Common myeloid progenitor, CD34-positive (primary cell): ENCODE measurements at regions of chr17 and their contacts with region 1.

Region 1: GRCh38 chr17:2054512-2055291 is at the start of gene HIC1:
- DNase-seq: peak in 2 of 3 donors; percentile 71 to 74
- H3K4me3 ChIP-seq: peak within 1 kb of the TSS; percentile 23 to 66 (median 56)
- H3K27ac ChIP-seq: no peak within 1 kb of the TSS
- H3K4me1 ChIP-seq: peaks cover 0 to 77% (median 71%) of the 10 kb centered on the region in 4 experiments
- H3K27me3 ChIP-seq: peaks cover 0 to 76% (median 21%) of the 10 kb centered on the region in 5 experiments

Region 2: GRCh38 chr17:2064980-2065785 is 10.5 kb after region 1 on chr17:
- CTCF ChIA-PET with region 1: interaction called, 21 read pairs
- POLR2A ChIA-PET with region 1: no interaction called
- DNase-seq: peak in 2 of 3 donors; percentile 64 to 69
- H3K4me3 ChIP-seq: no peak overlapping the region
- H3K27ac ChIP-seq: no peak overlapping the region
- H3K4me1 ChIP-seq: peaks cover 0 to 41% (median 27%) of the 10 kb centered on the region in 4 experiments
- H3K27me3 ChIP-seq: no peaks in the 10 kb centered on the region

Region 3: GRCh38 chr17:2087597-2088211 is 33.0 kb after region 1 on chr17:
- CTCF ChIA-PET with region 1: interaction called, 42 read pairs
- POLR2A ChIA-PET with region 1: no interaction called
- DNase-seq: peak; percentile 90 to 98 (median 97)
- H3K4me3 ChIP-seq: peak overlapping the region in 4 of 7 experiments; percentile 3 to 74 (median 20)
- H3K27ac ChIP-seq: no peak overlapping the region
- H3K4me1 ChIP-seq: peaks cover 35 to 86% (median 69%) of the 10 kb centered on the region in 4 experiments
- H3K27me3 ChIP-seq: peaks cover 0 to 1% (median 0%) of the 10 kb centered on the region in 5 experiments

Region 4: GRCh38 chr17:2122641-2123302 is 68.1 kb after region 1 on chr17:
- CTCF ChIA-PET with region 1: interaction called, 20 read pairs
- POLR2A ChIA-PET with region 1: interaction called, 3 read pairs
- DNase-seq: peak in 2 of 3 donors; percentile 79 to 84
- H3K4me3 ChIP-seq: peak overlapping the region in 3 of 7 experiments; percentile 24 to 44 (median 37)
- H3K27ac ChIP-seq: no peak overlapping the region
- H3K4me1 ChIP-seq: peaks cover 19 to 39% (median 28%) of the 10 kb centered on the region in 4 experiments
- H3K27me3 ChIP-seq: no peaks in the 10 kb centered on the region

Region 5: DNA sequence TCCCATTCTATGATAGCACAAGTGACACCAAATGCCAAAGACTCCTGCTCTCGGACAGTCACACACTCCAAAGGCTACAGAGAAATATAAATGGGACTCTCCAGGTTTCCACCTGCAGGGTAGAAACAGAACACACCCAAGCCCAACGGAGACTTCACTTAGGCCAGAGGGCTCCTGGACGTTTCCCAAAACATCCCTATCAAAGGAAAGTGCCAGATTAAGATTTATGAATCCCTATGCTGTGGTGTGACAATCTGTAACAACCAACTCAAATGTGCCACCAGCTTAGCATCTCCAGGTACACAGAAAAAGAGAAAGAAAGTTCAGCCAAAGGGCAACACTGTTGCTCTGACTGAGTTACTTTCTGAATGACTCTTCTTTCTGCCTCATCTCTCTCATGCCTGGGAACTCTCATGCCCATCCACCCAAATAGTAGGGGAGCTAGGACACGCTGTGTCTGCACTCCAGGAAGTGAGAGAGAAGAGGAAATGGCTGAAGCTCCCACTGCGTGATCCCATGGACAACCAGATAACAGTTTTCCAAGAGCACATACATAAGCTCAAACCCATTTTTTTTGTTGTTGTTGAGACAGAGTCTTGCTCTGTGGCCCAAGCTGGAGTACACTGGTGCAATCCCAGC is 199.2 kb after region 1 on chr17:
- CTCF ChIA-PET with region 1: interaction called, 17 read pairs
- POLR2A ChIA-PET with region 1: no interaction called
- DNase-seq: no peak
- H3K4me3 ChIP-seq: no peak overlapping the region
- H3K27ac ChIP-seq: no peak overlapping the region
- H3K4me1 ChIP-seq: peaks cover 0 to 2% (median 0%) of the 10 kb centered on the region in 4 experiments
- H3K27me3 ChIP-seq: no peaks in the 10 kb centered on the region

Region 6: GRCh38 chr17:2282297-2282873 is 227.7 kb after region 1 on chr17:
- CTCF ChIA-PET with region 1: interaction called, 10 read pairs
- POLR2A ChIA-PET with region 1: no interaction called
- DNase-seq: peak; percentile 68 to 84 (median 79)
- H3K4me3 ChIP-seq: no peak overlapping the region
- H3K27ac ChIP-seq: no peak overlapping the region
- H3K4me1 ChIP-seq: peaks cover 0 to 2% (median 0%) of the 10 kb centered on the region in 4 experiments
- H3K27me3 ChIP-seq: no peaks in the 10 kb centered on the region